ENCODE measurements at regions of chr1 and their contacts with region 1.

Region 1: GRCh38 chr1:31422505-31423319 is 9.7 kb downstream of the SERINC2 start:
- DNase-seq: peak; percentile 58 to 76 (median 68)
- H3K4me3 ChIP-seq: no peak overlapping the region
- H3K4me3 Mint-ChIP-seq: peak overlapping the region in 1 of 2 donors; percentile 15
- H3K27ac ChIP-seq: no peak overlapping the region
- H3K27ac Mint-ChIP-seq: peak overlapping the region in 3 of 7 donors; percentile 48 to 71 (median 54)
- H3K4me1 ChIP-seq: peaks cover 0 to 4% of the 10 kb centered on the region in 2 donors
- H3K4me1 Mint-ChIP-seq: peaks cover 8% of the 10 kb centered on the region
- H3K27me3 ChIP-seq: no peaks in the 10 kb centered on the region
- H3K27me3 Mint-ChIP-seq: peaks cover 7 to 16% (median 13%) of the 10 kb centered on the region in 3 donors
- CTCF ChIP-seq: peak; percentile 89

Region 2: GRCh38 chr1:31182352-31182751 is 240.4 kb before region 1 on chr1:
- intact Hi-C with region 1: loop called (anchors 1 to 10 kb)
- DNase-seq: peak; percentile 38 to 71 (median 46)
- H3K4me3 ChIP-seq: peak overlapping the region in 1 of 3 experiments; percentile 54
- H3K4me3 Mint-ChIP-seq: peak overlapping the region in 1 of 2 donors; percentile 75
- H3K27ac ChIP-seq: no peak overlapping the region
- H3K27ac Mint-ChIP-seq: no peak overlapping the region
- H3K4me1 ChIP-seq: peaks cover 11 to 14% of the 10 kb centered on the region in 2 donors
- H3K4me1 Mint-ChIP-seq: peaks cover 13% of the 10 kb centered on the region
- H3K27me3 ChIP-seq: peaks cover 0 to 2% of the 10 kb centered on the region in 2 donors
- H3K27me3 Mint-ChIP-seq: peaks cover 5 to 37% (median 24%) of the 10 kb centered on the region in 3 donors
- CTCF ChIP-seq: no peak

Region 3: GRCh38 chr1:31394628-31395193 is 28.0 kb before region 1 on chr1:
- intact Hi-C with region 1: loop called in 1 of 2 experiments (anchors 2 kb)
- DNase-seq: peak; percentile 70 to 80 (median 74)
- H3K4me3 ChIP-seq: peak overlapping the region; percentile 20 to 76 (median 52)
- H3K4me3 Mint-ChIP-seq: peak overlapping the region; percentile 73 to 93
- H3K27ac ChIP-seq: no peak overlapping the region
- H3K27ac Mint-ChIP-seq: peak overlapping the region in 4 of 7 donors; percentile 57 to 73 (median 66)
- H3K4me1 ChIP-seq: peaks cover 13 to 26% of the 10 kb centered on the region in 2 donors
- H3K4me1 Mint-ChIP-seq: peaks cover 31% of the 10 kb centered on the region
- H3K27me3 ChIP-seq: no peaks in the 10 kb centered on the region
- H3K27me3 Mint-ChIP-seq: peaks cover 2 to 4% (median 3%) of the 10 kb centered on the region in 3 donors
- CTCF ChIP-seq: peak; percentile 91

Region 4: GRCh38 chr1:31444725-31445448 is 22.2 kb after region 1 on chr1:
- intact Hi-C with region 1: no loop called
- DNase-seq: no peak
- H3K4me3 ChIP-seq: no peak overlapping the region
- H3K4me3 Mint-ChIP-seq: no peak overlapping the region
- H3K27ac ChIP-seq: no peak overlapping the region
- H3K27ac Mint-ChIP-seq: no peak overlapping the region
- H3K4me1 ChIP-seq: peaks cover 3 to 7% of the 10 kb centered on the region in 2 donors
- H3K4me1 Mint-ChIP-seq: peaks cover 11% of the 10 kb centered on the region
- H3K27me3 ChIP-seq: no peaks in the 10 kb centered on the region
- H3K27me3 Mint-ChIP-seq: peaks cover 0 to 2% (median 2%) of the 10 kb centered on the region in 3 donors
- CTCF ChIP-seq: no peak

Region 5: GRCh38 chr1:31587720-31588394 is 165.1 kb after region 1 on chr1:
- intact Hi-C with region 1: no loop called
- DNase-seq: peak; percentile 43 to 68 (median 65)
- H3K4me3 ChIP-seq: no peak overlapping the region
- H3K4me3 Mint-ChIP-seq: peak overlapping the region in 1 of 2 donors; percentile 55
- H3K27ac ChIP-seq: no peak overlapping the region
- H3K27ac Mint-ChIP-seq: peak overlapping the region in 1 of 7 donors; percentile 68
- H3K4me1 ChIP-seq: peaks cover 0 to 9% of the 10 kb centered on the region in 2 donors
- H3K4me1 Mint-ChIP-seq: peaks cover 10% of the 10 kb centered on the region
- H3K27me3 ChIP-seq: peaks cover 0 to 18% of the 10 kb centered on the region in 2 donors
- H3K27me3 Mint-ChIP-seq: peaks cover 15 to 42% (median 29%) of the 10 kb centered on the region in 3 donors
- CTCF ChIP-seq: peak; percentile 78